ENCODE measurements at regions of chr3 and their contacts with region 1.

Region 1: GRCh38 chr3:29537889-29538609 is 257.2 kb downstream of the RBMS3 start:
- DNase-seq: no peak
- ATAC-seq: no peak
- H3K4me3 ChIP-seq: no peak overlapping the region
- H3K27ac ChIP-seq: peak overlapping the region in 3 of 4 donors; percentile 32 to 38 (median 36)
- H3K4me1 ChIP-seq: peaks cover 22 to 42% of the 10 kb centered on the region in 2 donors
- H3K27me3 ChIP-seq: no peaks in the 10 kb centered on the region
- CTCF ChIP-seq: no peak
- POLR2A ChIP-seq: no peak

Region 2: DNA sequence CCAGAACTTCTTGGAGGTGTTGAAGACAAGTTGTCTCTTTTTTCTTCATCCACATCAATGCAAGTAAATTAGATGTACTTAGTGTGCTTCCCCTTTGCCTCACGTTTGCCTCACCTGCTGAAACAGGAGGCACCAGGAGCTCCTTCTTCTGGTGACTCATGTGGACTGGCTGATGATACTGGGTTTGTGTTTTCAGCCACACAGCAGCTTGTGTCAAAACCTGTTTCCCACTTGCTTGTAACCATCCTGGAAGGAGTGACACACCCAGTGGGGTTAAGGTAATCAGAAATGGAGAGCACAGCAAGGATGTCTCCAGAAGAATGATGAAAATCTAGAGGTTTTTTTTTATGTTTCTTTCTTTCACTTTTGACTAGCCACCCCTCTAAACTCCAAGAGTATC is 400.4 kb before region 1 on chr3:
- in situ Hi-C with region 1: no loop called
- intact Hi-C with region 1: no loop called
- DNase-seq: no peak
- ATAC-seq: no peak
- H3K4me3 ChIP-seq: no peak overlapping the region
- H3K27ac ChIP-seq: no peak overlapping the region
- H3K4me1 ChIP-seq: peaks cover 6 to 11% of the 10 kb centered on the region in 2 donors
- H3K27me3 ChIP-seq: no peaks in the 10 kb centered on the region
- CTCF ChIP-seq: no peak
- POLR2A ChIP-seq: no peak

Region 3: GRCh38 chr3:29503958-29504357 is 34.1 kb before region 1 on chr3:
- in situ Hi-C with region 1: no loop called
- intact Hi-C with region 1: loop called (anchors 2 kb)
- DNase-seq: peak; percentile 26 to 66
- ATAC-seq: peak; percentile 82 to 98
- H3K4me3 ChIP-seq: no peak overlapping the region
- H3K27ac ChIP-seq: peak overlapping the region; percentile 44 to 68 (median 66)
- H3K4me1 ChIP-seq: peaks cover 20 to 28% of the 10 kb centered on the region in 2 donors
- H3K27me3 ChIP-seq: no peaks in the 10 kb centered on the region
- CTCF ChIP-seq: no peak
- POLR2A ChIP-seq: no peak

Region 4: DNA sequence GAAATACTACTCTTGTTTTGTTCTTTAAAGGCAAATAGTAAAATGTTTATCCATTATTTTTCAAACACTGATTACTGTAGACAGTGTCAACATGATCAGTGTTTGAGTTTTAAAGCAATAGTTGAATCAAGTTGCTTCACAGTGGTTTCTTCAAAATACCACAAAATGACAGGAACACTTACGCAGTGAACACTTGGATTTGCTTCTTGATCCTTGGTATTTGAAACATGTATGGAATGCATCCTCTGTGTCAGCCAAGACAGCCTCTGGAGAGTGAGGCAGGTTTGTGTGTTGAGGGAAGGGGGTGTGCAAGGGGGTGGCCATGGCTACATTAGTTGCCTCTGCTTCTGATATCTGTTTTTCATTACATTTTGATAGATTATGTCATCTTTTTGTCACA is 155.8 kb after region 1 on chr3:
- in situ Hi-C with region 1: no loop called
- intact Hi-C with region 1: loop called (anchors 10 kb)
- DNase-seq: no peak
- ATAC-seq: peak in 1 of 2 donors; percentile 34
- H3K4me3 ChIP-seq: no peak overlapping the region
- H3K27ac ChIP-seq: peak overlapping the region; percentile 31 to 75 (median 62)
- H3K4me1 ChIP-seq: peaks cover 38 to 39% of the 10 kb centered on the region in 2 donors
- H3K27me3 ChIP-seq: no peaks in the 10 kb centered on the region
- CTCF ChIP-seq: no peak
- POLR2A ChIP-seq: no peak